Calu3 (cell line): ENCODE measurements at regions of chr1 and their contacts with region 1.

Region 1: GRCh38 chr1:50332941-50333594 is 90.2 kb downstream of the DMRTA2 start:
- DNase-seq: peak; percentile 77
- H3K4me3 Mint-ChIP-seq: peak overlapping the region; percentile 62
- H3K27ac Mint-ChIP-seq: no peak overlapping the region
- H3K4me1 Mint-ChIP-seq: peaks cover 7% of the 10 kb centered on the region
- H3K27me3 Mint-ChIP-seq: peaks cover 50% of the 10 kb centered on the region
- CTCF ChIP-seq: peak; percentile 93

Region 2: GRCh38 chr1:48572646-48573261 is 1760.3 kb before region 1 on chr1:
- CTCF ChIA-PET with region 1: no interaction called
- intact Hi-C with region 1: loop called (anchors 5 kb)
- DNase-seq: peak; percentile 62
- H3K4me3 Mint-ChIP-seq: no peak overlapping the region
- H3K27ac Mint-ChIP-seq: no peak overlapping the region
- H3K4me1 Mint-ChIP-seq: no peaks in the 10 kb centered on the region
- H3K27me3 Mint-ChIP-seq: peaks cover 71% of the 10 kb centered on the region
- CTCF ChIP-seq: peak; percentile 70

Region 3: GRCh38 chr1:49086327-49086726 is 1246.7 kb before region 1 on chr1:
- CTCF ChIA-PET with region 1: no interaction called
- intact Hi-C with region 1: loop called (anchors 5 kb)
- DNase-seq: no peak
- H3K4me3 Mint-ChIP-seq: no peak overlapping the region
- H3K27ac Mint-ChIP-seq: no peak overlapping the region
- H3K4me1 Mint-ChIP-seq: no peaks in the 10 kb centered on the region
- H3K27me3 Mint-ChIP-seq: no peaks in the 10 kb centered on the region
- CTCF ChIP-seq: no peak

Region 4: GRCh38 chr1:49765034-49765433 is 568.0 kb before region 1 on chr1:
- CTCF ChIA-PET with region 1: no interaction called
- intact Hi-C with region 1: loop called (anchors 10 kb)
- DNase-seq: peak; percentile 22
- H3K4me3 Mint-ChIP-seq: no peak overlapping the region
- H3K27ac Mint-ChIP-seq: no peak overlapping the region
- H3K4me1 Mint-ChIP-seq: peaks cover 10% of the 10 kb centered on the region
- H3K27me3 Mint-ChIP-seq: no peaks in the 10 kb centered on the region
- CTCF ChIP-seq: peak; percentile 50

Region 5: GRCh38 chr1:50175719-50176639 is 157.1 kb before region 1 on chr1:
- CTCF ChIA-PET with region 1: no interaction called
- intact Hi-C with region 1: loop called (anchors 10 kb)
- DNase-seq: no peak
- H3K4me3 Mint-ChIP-seq: no peak overlapping the region
- H3K27ac Mint-ChIP-seq: no peak overlapping the region
- H3K4me1 Mint-ChIP-seq: no peaks in the 10 kb centered on the region
- H3K27me3 Mint-ChIP-seq: peaks cover 78% of the 10 kb centered on the region
- CTCF ChIP-seq: no peak